MCF 10A (cell line): ENCODE measurements at regions of chr22 and their contacts with region 1.

Region 1: DNA sequence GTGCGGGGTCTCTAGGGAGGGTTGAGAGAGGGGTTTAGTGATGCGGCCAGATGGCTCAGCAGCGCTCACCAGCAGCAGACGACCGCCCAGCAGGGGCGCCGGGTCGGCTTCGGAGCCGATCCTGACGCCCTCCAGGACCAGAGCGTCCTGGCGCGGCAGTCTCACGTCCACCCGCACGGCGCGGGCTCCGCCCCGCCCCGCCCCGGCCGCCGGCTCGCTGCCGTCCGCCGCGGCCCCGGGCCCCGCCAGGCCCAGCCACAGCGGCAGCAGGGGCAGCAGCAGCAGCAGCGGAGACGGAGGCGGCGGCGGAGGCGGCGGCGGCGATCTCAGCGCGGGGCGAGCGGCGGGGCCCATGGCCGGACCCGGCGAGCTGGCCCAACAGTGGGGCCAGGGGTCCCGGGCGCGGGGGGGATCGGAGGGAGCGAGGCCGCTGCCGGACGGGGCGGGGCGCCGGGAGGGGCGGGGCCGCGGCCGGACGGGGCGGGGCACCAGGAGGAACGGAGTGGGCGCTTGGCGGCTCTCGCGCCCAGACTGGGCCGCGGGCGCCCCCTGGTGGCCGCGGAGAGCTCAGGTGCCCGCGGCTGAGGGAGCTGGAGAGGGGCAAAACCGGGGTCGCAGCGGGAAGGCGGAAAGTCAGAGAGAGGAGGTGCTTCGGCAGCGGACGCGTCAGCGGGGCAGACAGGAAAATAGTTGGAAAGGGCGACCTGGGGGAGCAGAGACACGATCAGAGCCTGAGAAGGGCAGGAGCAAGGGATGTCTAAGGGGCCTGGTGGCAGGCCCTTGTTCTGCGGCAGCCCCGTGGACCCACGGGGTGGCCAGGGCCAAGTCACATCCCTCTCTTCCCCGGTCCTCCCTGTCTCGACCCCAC is at the start of gene RNF215:
- DNase-seq: peak; percentile 74
- H3K4me3 Mint-ChIP-seq: peak within 1 kb of the TSS; percentile 79
- H3K27ac Mint-ChIP-seq: peak within 1 kb of the TSS; percentile 74
- H3K4me1 Mint-ChIP-seq: peaks cover 12% of the 10 kb centered on the region
- H3K27me3 Mint-ChIP-seq: no peaks in the 10 kb centered on the region
- CTCF ChIP-seq: peak; percentile 95
- total RNA-seq, gene RNF215: 18.4 and 19.6 TPM in 2 replicates

Region 2: GRCh38 chr22:30235687-30236170 is 151.5 kb before region 1 on chr22:
- CTCF ChIA-PET with region 1: no interaction called
- POLR2A ChIA-PET with region 1: no interaction called
- intact Hi-C with region 1: no loop called
- DNase-seq: peak; percentile 57
- H3K4me3 Mint-ChIP-seq: no peak overlapping the region
- H3K27ac Mint-ChIP-seq: peak overlapping the region; percentile 78
- H3K4me1 Mint-ChIP-seq: peaks cover 22% of the 10 kb centered on the region
- H3K27me3 Mint-ChIP-seq: no peaks in the 10 kb centered on the region
- CTCF ChIP-seq: no peak

Region 3: GRCh38 chr22:30253205-30253852 is 133.9 kb before region 1 on chr22:
- CTCF ChIA-PET with region 1: interaction called, 9 read pairs
- POLR2A ChIA-PET with region 1: no interaction called
- intact Hi-C with region 1: loop called (anchors 1 kb)
- DNase-seq: no peak
- H3K4me3 Mint-ChIP-seq: no peak overlapping the region
- H3K27ac Mint-ChIP-seq: no peak overlapping the region
- H3K4me1 Mint-ChIP-seq: peaks cover 12% of the 10 kb centered on the region
- H3K27me3 Mint-ChIP-seq: no peaks in the 10 kb centered on the region
- CTCF ChIP-seq: no peak

Region 4: DNA sequence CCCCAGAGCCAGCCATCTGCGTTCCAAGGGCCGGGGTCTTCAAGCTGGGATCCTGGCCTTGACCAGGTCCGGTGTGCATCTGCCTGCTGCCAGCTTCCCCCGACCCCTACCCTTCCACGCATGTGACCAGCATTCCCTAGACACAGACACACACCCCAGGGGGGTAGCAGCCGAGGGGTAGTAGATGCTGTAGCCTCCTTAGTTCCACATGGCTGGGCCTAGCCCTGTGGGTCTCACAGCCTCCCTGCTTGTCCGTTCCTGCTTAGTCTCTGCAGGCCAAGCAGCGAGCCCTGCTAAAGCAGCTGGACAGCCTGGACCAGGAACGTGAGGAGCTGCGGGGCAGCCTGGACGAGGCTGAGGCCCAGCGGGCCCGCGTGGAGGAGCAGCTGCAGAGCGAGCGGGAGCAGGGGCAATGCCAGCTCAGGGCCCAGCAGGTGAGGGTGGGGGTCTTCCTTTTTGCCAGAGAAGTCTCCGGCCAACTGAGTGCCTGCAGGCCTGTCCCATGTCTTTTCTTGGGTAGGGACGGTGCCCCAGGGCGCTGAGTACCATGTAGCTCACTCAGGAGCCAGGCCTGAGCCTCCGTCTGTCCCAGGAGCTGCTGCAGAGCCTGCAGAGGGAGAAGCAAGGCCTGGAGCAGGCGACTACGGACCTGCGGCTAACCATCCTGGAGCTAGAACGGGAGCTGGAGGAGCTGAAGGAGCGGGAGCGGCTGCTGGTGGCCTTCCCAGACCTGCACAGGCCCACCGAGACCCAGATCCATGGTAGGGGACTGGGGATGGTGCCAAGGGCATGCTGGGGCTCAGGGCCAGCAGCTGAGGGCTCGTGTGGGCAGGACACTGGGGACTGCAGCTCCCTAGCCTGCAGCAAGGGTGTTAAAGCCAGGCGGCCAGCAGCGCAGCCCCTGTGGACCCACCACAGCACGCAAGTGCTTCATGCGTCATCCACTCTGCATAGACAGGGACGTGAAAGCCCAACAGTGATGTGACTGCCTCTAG is 13.6 kb before region 1 on chr22:
- CTCF ChIA-PET with region 1: interaction called, 13 read pairs
- POLR2A ChIA-PET with region 1: interaction called, 3 read pairs
- intact Hi-C with region 1: no loop called
- DNase-seq: no peak
- H3K4me3 Mint-ChIP-seq: no peak overlapping the region
- H3K27ac Mint-ChIP-seq: no peak overlapping the region
- H3K4me1 Mint-ChIP-seq: no peaks in the 10 kb centered on the region
- H3K27me3 Mint-ChIP-seq: no peaks in the 10 kb centered on the region
- CTCF ChIP-seq: no peak

Region 5: GRCh38 chr22:30408414-30409104 is 21.4 kb after region 1 on chr22:
- CTCF ChIA-PET with region 1: interaction called, 17 read pairs
- POLR2A ChIA-PET with region 1: interaction called, 13 read pairs
- intact Hi-C with region 1: no loop called
- DNase-seq: peak; percentile 92
- H3K4me3 Mint-ChIP-seq: no peak overlapping the region
- H3K27ac Mint-ChIP-seq: peak overlapping the region; percentile 73
- H3K4me1 Mint-ChIP-seq: peaks cover 47% of the 10 kb centered on the region
- H3K27me3 Mint-ChIP-seq: no peaks in the 10 kb centered on the region
- CTCF ChIP-seq: no peak

Region 6: DNA sequence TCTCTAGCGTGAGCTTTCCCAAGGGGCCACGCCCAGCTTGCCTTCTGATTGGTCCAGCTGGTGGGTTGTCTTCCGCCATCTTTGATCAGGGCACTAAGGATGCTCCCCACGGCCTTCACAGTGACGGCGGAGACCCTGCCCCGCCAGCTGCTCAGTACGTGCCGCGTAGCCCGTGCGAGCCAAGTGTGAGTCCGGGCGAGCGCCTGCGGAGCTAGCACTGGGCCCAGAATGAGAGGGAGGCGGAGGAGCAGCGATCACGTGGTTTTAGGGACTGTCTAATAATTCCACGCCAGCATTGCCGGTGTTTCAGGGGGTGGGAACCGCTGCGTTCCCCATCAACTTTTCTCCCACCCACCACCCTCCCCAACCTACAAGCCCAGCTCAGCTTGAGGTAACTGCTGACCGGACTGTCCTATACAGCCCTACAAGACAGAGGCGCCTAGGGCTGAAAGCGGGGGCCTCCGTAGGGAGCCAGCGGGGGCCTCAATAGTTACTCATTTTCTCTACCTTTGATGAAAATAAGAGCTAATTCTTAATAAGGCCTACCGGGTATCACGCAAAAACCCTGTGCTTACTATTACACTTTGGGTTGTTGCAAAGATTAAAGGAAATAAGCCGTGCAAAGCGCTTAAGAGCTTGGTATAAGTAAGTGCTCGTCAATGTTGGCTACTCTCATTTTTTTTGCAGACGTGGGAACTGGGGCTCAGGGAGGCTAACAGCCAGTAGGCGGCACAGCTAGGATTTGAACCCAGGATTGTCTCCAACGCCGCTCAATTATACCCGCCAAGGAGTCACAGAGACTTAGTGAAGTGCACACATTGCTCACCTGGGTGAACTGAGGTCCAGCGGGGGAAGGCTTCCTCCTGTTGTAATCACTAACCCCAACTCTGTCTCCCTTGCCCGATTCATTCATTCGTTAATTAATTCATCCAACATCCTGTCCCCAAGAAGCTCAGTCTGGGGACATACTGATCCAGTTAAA is 37.1 kb after region 1 on chr22:
- CTCF ChIA-PET with region 1: interaction called, 83 read pairs
- POLR2A ChIA-PET with region 1: interaction called, 532 read pairs
- intact Hi-C with region 1: loop called (anchors 1 kb)
- DNase-seq: peak; percentile 100
- H3K4me3 Mint-ChIP-seq: peak overlapping the region; percentile 90
- H3K27ac Mint-ChIP-seq: peak overlapping the region; percentile 97
- H3K4me1 Mint-ChIP-seq: peaks cover 44% of the 10 kb centered on the region
- H3K27me3 Mint-ChIP-seq: no peaks in the 10 kb centered on the region
- CTCF ChIP-seq: peak; percentile 10

Region 7: GRCh38 chr22:30562366-30562765 is 175.2 kb after region 1 on chr22:
- CTCF ChIA-PET with region 1: no interaction called
- POLR2A ChIA-PET with region 1: no interaction called
- intact Hi-C with region 1: no loop called
- DNase-seq: peak; percentile 71
- H3K4me3 Mint-ChIP-seq: no peak overlapping the region
- H3K27ac Mint-ChIP-seq: no peak overlapping the region
- H3K4me1 Mint-ChIP-seq: peaks cover 5% of the 10 kb centered on the region
- H3K27me3 Mint-ChIP-seq: no peaks in the 10 kb centered on the region
- CTCF ChIP-seq: no peak